Heart right ventricle (tissue), 16 donors: ENCODE measurements at regions of chr11 and their contacts with region 1.

Region 1: DNA sequence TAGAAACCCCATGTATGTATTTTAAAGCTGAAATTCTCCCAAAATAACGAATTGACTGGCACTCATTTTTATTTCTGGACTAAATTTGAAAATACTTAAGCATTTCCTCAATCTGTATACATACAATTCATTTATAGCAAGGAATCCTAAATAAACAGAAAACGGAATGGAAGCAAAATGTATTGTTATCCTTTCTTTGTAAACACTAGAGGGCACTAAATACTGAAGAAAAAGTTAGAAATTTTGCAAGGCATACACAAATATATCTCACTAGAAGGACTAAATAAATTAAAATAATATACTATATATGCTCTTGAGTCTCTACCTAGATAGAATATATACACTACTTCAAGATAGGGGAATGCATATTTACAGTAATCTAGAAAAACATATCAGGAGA is 23.1 kb upstream of the ANO5 start:
- DNase-seq: no peak
- ATAC-seq: no peak
- H3K4me3 ChIP-seq: no peak overlapping the region
- H3K27ac ChIP-seq: no peak overlapping the region
- H3K4me1 ChIP-seq: peaks cover 0 to 4% (median 0%) of the 10 kb centered on the region in 9 donors
- H3K27me3 ChIP-seq: no peaks in the 10 kb centered on the region
- CTCF ChIP-seq: peak in 7 of 9 donors; percentile 37 to 60 (median 50)

Region 2: DNA sequence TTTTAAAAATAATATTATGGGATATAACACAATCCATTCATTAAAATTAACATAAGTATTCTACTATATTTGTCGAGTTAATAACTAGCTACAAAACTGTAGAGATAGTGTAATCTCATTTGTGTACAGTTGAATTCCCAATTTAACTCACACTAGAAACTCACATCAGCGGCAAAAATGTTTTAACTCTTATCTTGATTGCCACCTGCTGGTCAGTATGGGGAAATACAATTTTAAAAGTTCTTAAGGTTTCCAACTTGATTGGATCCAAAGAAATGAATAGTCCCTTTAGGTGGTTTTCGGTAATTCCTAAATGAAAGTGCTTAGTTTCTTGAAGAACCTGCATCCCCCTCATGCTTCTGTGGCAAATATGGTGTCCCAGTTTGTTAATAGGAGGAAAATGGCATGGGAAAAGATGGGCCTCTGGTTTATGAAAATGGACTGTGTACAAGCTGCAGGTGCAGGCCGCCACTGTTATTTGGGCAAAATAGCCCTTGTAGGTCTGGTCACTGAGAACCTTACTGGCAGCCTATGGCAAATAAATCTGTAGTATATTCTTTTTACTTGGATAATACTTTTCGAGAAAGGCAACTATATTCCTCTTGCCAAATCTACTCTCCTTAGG is 134.6 kb after region 1 on chr11:
- intact Hi-C with region 1: loop called in 8 of 10 experiments (anchors 2 to 10 kb)
- DNase-seq: no peak
- ATAC-seq: no peak
- H3K4me3 ChIP-seq: no peak overlapping the region
- H3K27ac ChIP-seq: no peak overlapping the region
- H3K4me1 ChIP-seq: no peaks in the 10 kb centered on the region
- H3K27me3 ChIP-seq: peaks cover 0 to 40% (median 7%) of the 10 kb centered on the region in 7 donors
- CTCF ChIP-seq: peak; percentile 44 to 80 (median 73)